ENCODE measurements at regions of chr2 and their contacts with region 1.

Region 1: GRCh38 chr2:82524826-82525225 is 1934.3 kb downstream of the SUCLG1 start:
- DNase-seq: no peak
- H3K4me3 ChIP-seq: no peak overlapping the region
- H3K27ac ChIP-seq: no peak overlapping the region
- H3K4me1 ChIP-seq: no peaks in the 10 kb centered on the region
- H3K27me3 ChIP-seq: no peaks in the 10 kb centered on the region
- CTCF ChIP-seq: no peak

Region 2: GRCh38 chr2:82275599-82275998 is 249.2 kb before region 1 on chr2:
- intact Hi-C with region 1: loop called (anchors 5 kb)
- DNase-seq: no peak
- H3K4me3 ChIP-seq: no peak overlapping the region
- H3K27ac ChIP-seq: no peak overlapping the region
- H3K4me1 ChIP-seq: no peaks in the 10 kb centered on the region
- H3K27me3 ChIP-seq: no peaks in the 10 kb centered on the region
- CTCF ChIP-seq: no peak

Region 3: DNA sequence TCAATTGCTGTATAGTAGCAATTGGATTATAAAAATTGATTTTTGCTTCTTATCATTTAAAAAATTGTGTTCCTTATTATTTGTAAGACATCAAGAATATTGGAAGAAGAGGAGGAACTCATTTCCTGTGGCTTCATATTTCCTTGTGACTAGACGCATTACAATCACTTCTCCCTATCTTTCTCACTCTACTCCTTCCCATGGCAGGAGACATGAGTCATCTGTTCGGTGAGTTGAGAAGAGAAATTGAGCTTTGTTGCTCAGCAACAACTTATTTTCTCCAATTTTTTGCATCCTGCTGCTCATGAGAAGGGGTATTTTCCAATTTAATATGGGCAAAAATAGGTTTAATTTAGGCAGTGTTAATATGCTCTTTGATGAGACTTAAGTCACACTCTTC is 150.4 kb after region 1 on chr2:
- intact Hi-C with region 1: no loop called
- DNase-seq: no peak
- H3K4me3 ChIP-seq: no peak overlapping the region
- H3K27ac ChIP-seq: no peak overlapping the region
- H3K4me1 ChIP-seq: no peaks in the 10 kb centered on the region
- H3K27me3 ChIP-seq: no peaks in the 10 kb centered on the region
- CTCF ChIP-seq: no peak